Left ventricle myocardium inferior (tissue), 1 donor: ENCODE measurements at regions of chr12 and their contacts with region 1.

Region 1: DNA sequence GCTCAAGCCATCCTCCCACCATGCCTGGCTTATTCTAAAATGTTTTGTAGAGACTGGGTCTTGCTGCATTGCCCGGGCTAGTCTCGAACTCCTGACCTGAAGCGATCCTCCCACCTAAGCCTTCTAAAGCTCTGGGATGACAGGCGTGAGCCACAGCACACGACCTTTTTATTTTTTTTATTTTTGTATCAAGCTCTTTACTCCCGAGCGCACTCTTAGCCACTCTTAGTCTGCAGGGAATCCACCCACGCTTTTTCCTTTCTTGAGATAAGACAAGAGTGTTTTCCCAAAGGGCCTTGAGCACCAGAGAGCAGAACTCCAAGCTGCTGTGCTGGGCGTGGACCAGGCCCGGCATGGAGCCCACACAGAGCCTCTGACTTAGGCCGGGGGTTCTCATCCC is 23.4 kb downstream of the MAP1LC3B2 start:
- DNase-seq: peak; percentile 56
- H3K4me3 ChIP-seq: no peak overlapping the region
- H3K27ac ChIP-seq: no peak overlapping the region
- H3K4me1 ChIP-seq: peaks cover 8% of the 10 kb centered on the region
- H3K27me3 ChIP-seq: peaks cover 34% of the 10 kb centered on the region
- CTCF ChIP-seq: no peak

Region 2: GRCh38 chr12:116257215-116257614 is 325.4 kb before region 1 on chr12:
- intact Hi-C with region 1: no loop called
- DNase-seq: no peak
- H3K4me3 ChIP-seq: no peak overlapping the region
- H3K27ac ChIP-seq: peak overlapping the region; percentile 7
- H3K4me1 ChIP-seq: peaks cover 70% of the 10 kb centered on the region
- H3K27me3 ChIP-seq: no peaks in the 10 kb centered on the region
- CTCF ChIP-seq: no peak

Region 3: GRCh38 chr12:116434155-116435011 is 148.2 kb before region 1 on chr12:
- intact Hi-C with region 1: no loop called
- DNase-seq: peak; percentile 79
- H3K4me3 ChIP-seq: peak overlapping the region; percentile 52
- H3K27ac ChIP-seq: peak overlapping the region; percentile 70
- H3K4me1 ChIP-seq: peaks cover 13% of the 10 kb centered on the region
- H3K27me3 ChIP-seq: peaks cover 11% of the 10 kb centered on the region
- CTCF ChIP-seq: no peak

Region 4: GRCh38 chr12:116515684-116516083 is 66.9 kb before region 1 on chr12:
- intact Hi-C with region 1: loop called (anchors 10 kb)
- DNase-seq: no peak
- H3K4me3 ChIP-seq: no peak overlapping the region
- H3K27ac ChIP-seq: no peak overlapping the region
- H3K4me1 ChIP-seq: no peaks in the 10 kb centered on the region
- H3K27me3 ChIP-seq: peaks cover 31% of the 10 kb centered on the region
- CTCF ChIP-seq: no peak

Region 5: GRCh38 chr12:116818948-116819832 is 236.6 kb after region 1 on chr12:
- intact Hi-C with region 1: no loop called
- DNase-seq: peak; percentile 90
- H3K4me3 ChIP-seq: peak overlapping the region; percentile 87
- H3K27ac ChIP-seq: peak overlapping the region; percentile 98
- H3K4me1 ChIP-seq: peaks cover 13% of the 10 kb centered on the region
- H3K27me3 ChIP-seq: no peaks in the 10 kb centered on the region
- CTCF ChIP-seq: peak; percentile 22